ENCODE measurements at regions of chr7 and their contacts with region 1.

Region 1: DNA sequence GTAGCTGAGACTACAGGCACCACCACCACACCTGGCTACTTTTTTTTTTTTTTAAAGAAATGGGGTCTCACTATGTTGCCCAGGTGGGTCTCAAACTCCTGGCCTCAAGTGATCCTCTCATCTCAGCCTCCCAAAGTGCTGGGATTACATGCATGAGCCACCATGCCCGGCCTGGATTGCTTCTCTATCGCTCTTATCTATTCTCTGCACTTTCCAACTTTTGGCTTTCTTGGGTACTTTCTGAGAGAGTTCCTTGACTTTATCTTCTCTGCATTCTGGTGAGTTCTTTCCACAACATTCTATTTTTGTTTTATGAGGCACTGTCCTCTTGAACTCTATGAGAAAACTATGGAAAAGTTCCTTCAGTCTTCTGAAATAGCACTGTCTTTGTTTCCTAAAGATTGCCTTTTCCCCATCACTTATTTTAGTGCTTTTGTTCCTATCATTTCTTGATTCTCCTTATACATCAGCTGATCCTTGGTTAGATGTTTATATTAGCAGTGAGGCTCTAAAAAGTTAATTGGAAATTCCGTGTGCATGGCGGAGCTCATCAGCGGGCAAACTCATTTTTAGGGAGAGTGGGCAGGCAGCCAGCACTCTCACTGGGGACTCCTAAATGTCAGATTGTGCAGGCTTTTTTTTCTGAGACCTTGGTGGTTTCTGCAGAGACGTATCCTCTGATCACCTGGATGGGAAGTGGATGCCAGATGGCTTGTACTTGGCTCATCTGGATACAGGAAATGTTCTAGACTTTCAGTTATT is 43.9 kb downstream of the HIP1 start:
- DNase-seq: no peak
- H3K4me3 ChIP-seq: no peak overlapping the region
- H3K27ac ChIP-seq: no peak overlapping the region
- H3K4me1 ChIP-seq: no peaks in the 10 kb centered on the region
- H3K27me3 ChIP-seq: no peaks in the 10 kb centered on the region
- CTCF ChIP-seq: no peak
- POLR2A ChIP-seq: no peak

Region 2: GRCh38 chr7:75565132-75565837 is 129.5 kb before region 1 on chr7:
- intact Hi-C with region 1: no loop called
- DNase-seq: peak in 1 of 2 donors; percentile 47
- H3K4me3 ChIP-seq: no peak overlapping the region
- H3K27ac ChIP-seq: peak overlapping the region; percentile 24 to 33
- H3K4me1 ChIP-seq: no peaks in the 10 kb centered on the region
- H3K27me3 ChIP-seq: no peaks in the 10 kb centered on the region
- CTCF ChIP-seq: no peak
- POLR2A ChIP-seq: no peak

Region 3: DNA sequence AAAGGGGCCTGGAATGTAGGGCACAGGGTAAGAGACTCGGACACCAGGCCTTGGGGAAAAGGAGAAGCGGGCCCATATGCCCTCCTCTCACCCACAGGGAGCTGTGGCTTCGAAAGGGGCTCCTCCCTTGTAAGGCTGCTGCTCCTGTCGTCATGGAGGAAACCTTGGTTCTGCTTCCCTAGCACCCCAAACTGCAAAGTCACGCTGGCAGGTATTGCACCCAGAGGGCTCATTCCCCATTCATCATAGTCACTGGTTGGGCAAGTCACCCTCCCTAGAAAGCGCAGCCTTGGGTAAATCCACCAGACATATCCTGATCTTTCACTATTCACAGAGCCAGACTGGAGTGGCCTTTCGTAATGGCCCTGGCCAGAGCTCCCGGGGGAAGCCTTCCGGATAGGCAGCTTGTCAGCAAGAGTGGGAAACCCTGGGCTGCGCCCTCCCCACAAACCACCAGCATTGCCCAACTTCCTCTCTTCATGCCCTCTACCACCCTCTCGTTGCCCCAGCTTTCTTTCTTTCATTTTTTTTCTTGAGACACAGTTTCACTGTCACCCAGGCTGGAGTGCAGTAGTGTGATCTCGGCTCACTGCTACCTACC is 77.1 kb before region 1 on chr7:
- intact Hi-C with region 1: loop called (anchors 10 kb)
- DNase-seq: peak; percentile 30 to 31
- H3K4me3 ChIP-seq: no peak overlapping the region
- H3K27ac ChIP-seq: no peak overlapping the region
- H3K4me1 ChIP-seq: no peaks in the 10 kb centered on the region
- H3K27me3 ChIP-seq: no peaks in the 10 kb centered on the region
- CTCF ChIP-seq: no peak
- POLR2A ChIP-seq: no peak

Region 4: DNA sequence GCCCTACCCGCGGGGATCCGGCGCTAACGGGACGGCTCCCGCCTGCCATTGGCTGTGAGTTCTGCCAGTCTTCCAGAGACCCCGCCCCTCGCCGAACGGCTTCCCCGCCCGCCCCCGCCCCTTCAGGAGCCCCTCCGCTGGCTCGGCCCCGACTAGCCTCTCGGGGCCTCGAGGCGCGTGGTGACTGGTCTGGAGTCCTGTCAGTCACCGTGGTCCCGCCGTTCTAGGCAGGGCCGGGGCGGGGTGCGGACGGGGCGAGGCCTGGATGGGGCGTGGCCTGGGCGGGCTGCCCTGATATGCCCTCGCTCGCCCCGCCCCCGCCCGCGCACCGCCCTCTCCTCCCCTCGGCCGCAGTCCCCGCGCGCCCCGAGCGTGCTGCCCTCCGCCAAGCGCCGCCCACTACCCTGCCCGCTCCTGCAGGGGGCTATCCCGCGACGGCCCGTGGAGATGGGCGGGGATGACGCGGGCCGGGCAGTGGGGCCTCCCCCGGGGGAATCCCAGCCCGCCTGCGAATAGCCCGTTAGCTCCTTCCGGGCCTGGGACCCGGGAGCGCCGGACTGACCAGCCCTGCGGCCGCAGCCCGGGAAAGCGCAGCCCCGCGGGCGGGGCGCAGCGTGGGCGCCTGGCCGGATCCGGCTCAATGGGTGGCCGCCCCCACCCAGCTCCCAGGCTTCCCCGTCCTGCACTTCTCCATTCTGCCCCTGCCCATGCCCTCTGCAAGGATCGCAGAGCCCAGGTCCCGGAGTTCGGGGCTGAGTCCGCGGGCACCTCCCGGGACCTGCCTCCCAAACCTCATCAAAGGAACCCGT is 44.4 kb after region 1 on chr7:
- intact Hi-C with region 1: no loop called
- DNase-seq: peak; percentile 99 to 100
- H3K4me3 ChIP-seq: peak overlapping the region; percentile 97 to 100
- H3K27ac ChIP-seq: peak overlapping the region; percentile 88 to 95
- H3K4me1 ChIP-seq: no peaks in the 10 kb centered on the region
- H3K27me3 ChIP-seq: no peaks in the 10 kb centered on the region
- CTCF ChIP-seq: peak in 3 of 4 experiments; percentile 15 to 56 (median 16)
- POLR2A ChIP-seq: peak in 1 of 2 donors; percentile 66

Region 5: DNA sequence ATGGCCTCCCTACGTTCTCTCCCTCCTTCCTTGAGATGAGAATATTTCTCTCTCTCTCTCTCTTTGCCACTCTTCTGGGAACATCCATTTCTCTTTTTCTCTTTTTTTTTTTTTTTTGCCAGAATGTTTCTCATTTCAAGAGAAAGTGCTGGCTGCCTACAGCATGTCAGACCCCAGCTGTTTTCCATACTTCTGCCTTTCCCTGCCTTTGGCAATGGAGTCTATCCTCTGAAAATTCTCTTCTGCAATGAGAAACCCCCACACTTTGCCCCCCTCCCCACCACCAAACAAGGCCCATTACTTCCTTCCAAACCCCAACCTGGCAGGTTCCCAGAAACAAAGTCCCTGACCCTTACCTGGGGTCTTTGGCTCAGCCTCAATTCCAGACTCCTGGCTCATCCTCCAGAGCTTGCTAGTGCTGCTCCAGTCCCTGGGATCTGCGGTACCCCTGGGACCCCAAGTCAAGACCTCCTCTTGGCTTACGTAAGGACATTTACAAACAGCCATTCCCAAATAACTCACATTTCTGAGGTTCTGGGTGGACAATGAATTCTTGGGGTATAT is 94.6 kb after region 1 on chr7:
- intact Hi-C with region 1: no loop called
- DNase-seq: no peak
- H3K4me3 ChIP-seq: no peak overlapping the region
- H3K27ac ChIP-seq: no peak overlapping the region
- H3K4me1 ChIP-seq: no peaks in the 10 kb centered on the region
- H3K27me3 ChIP-seq: no peaks in the 10 kb centered on the region
- CTCF ChIP-seq: no peak
- POLR2A ChIP-seq: no peak

Measured in uterus (tissue), 4 donors.